Aorta (tissue), 5 donors: ENCODE measurements at regions of chr6 and their contacts with region 1.

Region 1: GRCh38 chr6:169070506-169071176 is 183.0 kb downstream of the THBS2 start:
- DNase-seq: peak; percentile 94 to 95
- ATAC-seq: peak; percentile 96
- H3K4me3 ChIP-seq: no peak overlapping the region
- H3K27ac ChIP-seq: peak overlapping the region; percentile 83 to 89
- H3K4me1 ChIP-seq: no peaks in the 10 kb centered on the region
- H3K27me3 ChIP-seq: no peaks in the 10 kb centered on the region

Region 2: DNA sequence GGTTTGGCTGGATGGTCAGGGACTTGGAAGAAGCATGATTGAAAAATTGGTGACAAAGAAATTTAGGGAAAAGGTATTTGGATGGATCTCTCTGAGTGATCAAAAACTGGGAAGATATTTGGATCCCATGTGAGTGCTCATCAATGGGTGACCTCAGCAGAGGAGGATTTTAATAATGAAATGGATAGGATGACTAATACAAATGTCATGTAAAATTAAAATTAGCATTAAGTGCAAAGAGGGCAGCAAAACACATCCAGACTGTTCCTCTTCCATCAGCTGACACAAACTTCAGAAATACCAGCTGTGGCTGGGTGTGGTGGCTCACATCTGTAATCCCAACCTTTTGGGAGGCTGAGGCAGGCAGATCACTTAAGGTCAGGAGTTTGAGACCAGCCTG is 31.3 kb after region 1 on chr6:
- intact Hi-C with region 1: no loop called
- DNase-seq: no peak
- ATAC-seq: no peak
- H3K4me3 ChIP-seq: no peak overlapping the region
- H3K27ac ChIP-seq: no peak overlapping the region
- H3K4me1 ChIP-seq: no peaks in the 10 kb centered on the region
- H3K27me3 ChIP-seq: no peaks in the 10 kb centered on the region

Region 3: GRCh38 chr6:169162752-169163591 is 92.3 kb after region 1 on chr6:
- intact Hi-C with region 1: loop called (anchors 1 to 5 kb)
- DNase-seq: peak; percentile 88 to 92
- ATAC-seq: peak; percentile 77
- H3K4me3 ChIP-seq: no peak overlapping the region
- H3K27ac ChIP-seq: peak overlapping the region; percentile 24 to 85
- H3K4me1 ChIP-seq: peaks cover 0 to 3% of the 10 kb centered on the region in 2 donors
- H3K27me3 ChIP-seq: no peaks in the 10 kb centered on the region